ENCODE measurements at regions of chr1 and their contacts with region 1.

Region 1: GRCh38 chr1:222589462-222590302 is at the start of gene TAF1A:
- DNase-seq: peak; percentile 83 to 89
- ATAC-seq: peak; percentile 94 to 100 (median 98)
- H3K4me3 ChIP-seq: peak within 1 kb of the TSS; percentile 47 to 80 (median 74)
- H3K27ac ChIP-seq: peak within 1 kb of the TSS in 9 of 10 donors; percentile 67 to 92 (median 79)
- H3K4me1 ChIP-seq: peaks cover 0 to 23% (median 10%) of the 10 kb centered on the region in 9 donors
- H3K27me3 ChIP-seq: no peaks in the 10 kb centered on the region
- CTCF ChIP-seq: no peak
- total RNA-seq, gene TAF1A: 1.3 to 3.3 (median 1.8) TPM

Region 2: GRCh38 chr1:222617367-222617951 is 27.8 kb after region 1 on chr1:
- intact Hi-C with region 1: loop called in 1 of 10 experiments (anchors 2 kb)
- DNase-seq: peak; percentile 92 to 94
- ATAC-seq: peak; percentile 85 to 96 (median 96)
- H3K4me3 ChIP-seq: peak overlapping the region; percentile 46 to 97 (median 70)
- H3K27ac ChIP-seq: peak overlapping the region in 7 of 10 donors; percentile 28 to 74 (median 52)
- H3K4me1 ChIP-seq: peaks cover 0 to 25% (median 18%) of the 10 kb centered on the region in 9 donors
- H3K27me3 ChIP-seq: peaks cover 0 to 18% (median 0%) of the 10 kb centered on the region in 7 donors
- CTCF ChIP-seq: no peak

Region 3: GRCh38 chr1:222634180-222635013 is 44.7 kb after region 1 on chr1:
- intact Hi-C with region 1: loop called in 1 of 10 experiments (anchors 5 kb)
- DNase-seq: peak in 1 of 2 donors; percentile 85
- ATAC-seq: peak in 7 of 8 donors; percentile 55 to 84 (median 77)
- H3K4me3 ChIP-seq: no peak overlapping the region
- H3K27ac ChIP-seq: peak overlapping the region in 1 of 10 donors; percentile 16
- H3K4me1 ChIP-seq: no peaks in the 10 kb centered on the region
- H3K27me3 ChIP-seq: no peaks in the 10 kb centered on the region
- CTCF ChIP-seq: peak; percentile 85 to 95 (median 90)